ENCODE measurements at regions of chr1 and their contacts with region 1.

Region 1: DNA sequence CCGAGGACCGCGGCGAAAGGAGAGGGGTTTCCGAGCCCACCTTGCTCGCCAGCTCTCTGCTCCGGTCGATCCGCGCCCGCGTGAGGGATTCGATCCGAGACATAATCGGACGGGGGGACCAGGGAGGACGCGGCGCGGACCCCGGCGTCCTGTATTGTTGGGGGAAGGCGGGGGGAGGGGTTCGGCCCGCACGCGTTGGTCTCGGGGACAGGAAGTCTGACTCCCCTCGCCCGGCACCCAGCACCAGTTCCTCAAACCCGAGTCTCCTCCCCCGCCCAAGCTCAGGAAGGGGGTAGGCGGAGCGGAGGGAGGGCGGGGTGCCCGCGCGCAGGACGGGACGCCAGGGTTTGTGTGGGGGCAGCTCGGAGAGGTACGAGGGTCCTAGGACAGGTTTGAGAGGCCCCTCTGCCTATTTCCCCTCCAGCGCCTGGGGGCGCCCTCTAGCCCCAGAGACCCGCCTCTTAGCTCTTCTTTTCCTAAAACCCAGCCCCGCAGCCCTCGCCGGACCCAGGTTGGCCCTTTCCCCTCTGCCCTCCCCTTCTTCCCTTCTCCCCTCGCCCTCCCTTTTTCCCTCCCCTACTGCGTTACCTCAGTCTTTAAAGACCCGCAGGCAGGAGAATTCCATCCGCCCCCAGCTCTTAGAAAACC is at the start of gene ARHGEF2:
- DNase-seq: peak; percentile 63 to 82 (median 66)
- H3K4me3 ChIP-seq: peak within 1 kb of the TSS; percentile 87 to 96
- H3K4me3 Mint-ChIP-seq: peak within 1 kb of the TSS; percentile 93 to 99 (median 97)
- H3K27ac ChIP-seq: peak within 1 kb of the TSS; percentile 86
- H3K27ac Mint-ChIP-seq: peak within 1 kb of the TSS; percentile 81 to 98 (median 96)
- H3K4me1 ChIP-seq: peaks cover 73% of the 10 kb centered on the region
- H3K4me1 Mint-ChIP-seq: peaks cover 49 to 89% (median 62%) of the 10 kb centered on the region in 4 donors
- H3K27me3 ChIP-seq: no peaks in the 10 kb centered on the region
- H3K27me3 Mint-ChIP-seq: no peaks in the 10 kb centered on the region
- total RNA-seq, gene ARHGEF2: 190 to 198 TPM

Region 2: DNA sequence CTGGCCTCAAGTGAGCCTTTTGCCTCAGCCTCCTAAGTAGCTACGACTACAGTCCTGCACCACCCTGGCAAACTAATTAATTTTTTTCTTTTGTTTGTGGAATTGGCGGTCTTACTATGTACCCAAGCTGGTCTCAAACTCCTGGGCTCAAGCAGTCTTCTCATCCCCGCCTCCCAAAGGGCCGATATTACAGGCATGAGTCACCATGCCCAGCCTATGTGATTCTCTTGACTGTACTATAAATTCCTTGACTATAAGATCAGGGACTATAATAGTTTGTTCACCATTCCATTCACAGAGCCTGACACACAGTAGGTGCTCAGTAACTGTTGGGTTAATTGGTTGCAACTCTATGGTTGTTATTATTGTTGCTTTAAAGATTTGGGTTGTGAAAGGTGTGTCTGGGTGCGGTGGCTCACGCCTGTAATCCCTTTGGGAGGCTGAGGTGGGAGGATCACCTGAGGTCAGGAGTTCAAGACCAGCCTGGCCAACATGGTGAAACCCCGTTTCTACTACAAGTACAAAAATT is 272.3 kb before region 1 on chr1:
- CTCF ChIA-PET with region 1: no interaction called
- POLR2A ChIA-PET with region 1: no interaction called
- intact Hi-C with region 1: no loop called
- DNase-seq: no peak
- H3K4me3 ChIP-seq: no peak overlapping the region
- H3K4me3 Mint-ChIP-seq: no peak overlapping the region
- H3K27ac ChIP-seq: no peak overlapping the region
- H3K27ac Mint-ChIP-seq: peak overlapping the region in 1 of 7 donors; percentile 53
- H3K4me1 ChIP-seq: peaks cover 6% of the 10 kb centered on the region
- H3K4me1 Mint-ChIP-seq: peaks cover 17 to 31% (median 21%) of the 10 kb centered on the region in 4 donors
- H3K27me3 ChIP-seq: no peaks in the 10 kb centered on the region
- H3K27me3 Mint-ChIP-seq: no peaks in the 10 kb centered on the region

Region 3: DNA sequence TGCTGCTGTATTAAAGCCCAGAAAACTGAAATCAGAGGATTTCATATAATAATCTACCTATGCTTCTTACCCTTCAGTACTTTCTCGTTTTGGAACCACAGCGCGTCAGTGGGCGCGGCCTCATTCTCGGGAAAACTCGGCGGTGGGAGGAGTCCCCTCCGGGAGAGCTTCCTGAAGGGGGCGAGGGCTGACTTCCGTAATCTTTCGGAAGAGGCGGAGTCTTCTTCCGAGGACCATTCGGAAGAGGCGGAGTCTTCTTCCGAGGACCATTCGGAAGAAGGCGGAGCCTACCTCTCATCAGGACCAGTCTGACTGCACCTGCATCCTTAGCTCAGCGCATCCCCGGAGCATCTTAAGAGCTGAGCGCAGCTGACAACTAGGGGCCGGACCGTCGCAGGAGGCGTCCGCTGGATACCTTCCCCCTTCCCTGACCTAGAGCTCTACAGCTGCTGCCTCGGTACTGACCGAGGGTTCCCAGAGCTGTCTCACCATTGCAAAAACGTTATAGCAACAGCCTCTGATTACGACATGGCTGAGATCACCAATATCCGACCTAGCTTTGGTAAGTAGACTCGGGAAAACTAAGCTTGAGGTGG is 119.1 kb before region 1 on chr1 and contains the start of gene SYT11:
- CTCF ChIA-PET with region 1: no interaction called
- POLR2A ChIA-PET with region 1: interaction called, 6 read pairs
- intact Hi-C with region 1: loop called (anchors 5 kb)
- DNase-seq: peak; percentile 88 to 94 (median 91)
- H3K4me3 ChIP-seq: peak within 1 kb of the TSS; percentile 36 to 68
- H3K4me3 Mint-ChIP-seq: peak within 1 kb of the TSS; percentile 88 to 99 (median 90)
- H3K27ac ChIP-seq: peak within 1 kb of the TSS; percentile 73
- H3K27ac Mint-ChIP-seq: peak within 1 kb of the TSS; percentile 88 to 100 (median 96)
- H3K4me1 ChIP-seq: peaks cover 48% of the 10 kb centered on the region
- H3K4me1 Mint-ChIP-seq: peaks cover 18 to 53% (median 33%) of the 10 kb centered on the region in 4 donors
- H3K27me3 ChIP-seq: no peaks in the 10 kb centered on the region
- H3K27me3 Mint-ChIP-seq: no peaks in the 10 kb centered on the region
- total RNA-seq, gene SYT11: 17.7 to 18.2 TPM

Region 4: DNA sequence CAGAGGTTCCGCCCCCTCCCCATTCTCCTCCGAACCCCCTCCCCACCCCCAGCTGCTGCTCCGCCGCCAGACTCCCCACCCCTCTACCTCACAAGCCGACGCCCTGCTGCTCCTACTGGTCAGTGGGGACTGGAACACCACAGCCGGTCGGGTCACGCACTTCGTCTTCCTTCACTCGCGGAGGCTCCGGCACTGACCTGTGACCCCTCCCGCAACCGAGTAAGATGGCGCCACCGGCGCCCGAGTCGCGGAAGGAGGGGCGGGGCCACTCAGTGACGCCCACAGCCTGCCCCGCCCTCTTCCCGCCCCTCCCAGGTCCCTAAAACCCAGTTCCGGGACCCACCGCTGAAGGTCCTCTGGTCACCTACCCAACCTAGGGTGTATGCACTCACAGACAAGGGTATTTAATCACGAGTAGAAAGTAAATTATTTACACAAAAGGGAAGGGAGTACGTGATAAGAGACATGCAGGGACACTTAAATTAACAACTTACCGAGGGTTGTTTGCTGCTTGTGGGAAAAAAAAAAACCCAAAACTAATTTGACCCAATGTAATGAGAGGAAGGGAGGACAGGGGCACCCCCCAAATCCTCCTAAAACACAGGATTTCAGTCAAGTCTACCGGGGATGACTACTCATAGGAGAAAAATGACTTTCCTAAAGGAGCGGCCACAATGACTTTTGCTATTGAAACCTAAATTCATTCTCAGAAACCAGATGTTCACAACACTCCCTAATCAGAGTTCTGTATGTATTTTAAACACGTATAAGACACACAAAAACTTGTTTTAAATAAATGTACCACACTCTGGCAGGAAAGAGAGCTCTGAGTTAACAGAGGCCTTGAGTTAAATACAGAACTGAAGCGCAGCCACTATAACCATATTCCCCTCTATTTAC is 67.0 kb before region 1 on chr1 and contains the start of gene RIT1:
- CTCF ChIA-PET with region 1: interaction called, 3 read pairs
- POLR2A ChIA-PET with region 1: interaction called, 4 read pairs
- intact Hi-C with region 1: loop called (anchors 2 kb)
- DNase-seq: peak; percentile 78 to 87 (median 80)
- H3K4me3 ChIP-seq: peak within 1 kb of the TSS; percentile 85 to 86
- H3K4me3 Mint-ChIP-seq: peak within 1 kb of the TSS; percentile 92 to 99 (median 98)
- H3K27ac ChIP-seq: peak within 1 kb of the TSS; percentile 79
- H3K27ac Mint-ChIP-seq: peak within 1 kb of the TSS; percentile 86 to 99 (median 98)
- H3K4me1 ChIP-seq: peaks cover 21% of the 10 kb centered on the region
- H3K4me1 Mint-ChIP-seq: peaks cover 16 to 28% (median 21%) of the 10 kb centered on the region in 4 donors
- H3K27me3 ChIP-seq: no peaks in the 10 kb centered on the region
- H3K27me3 Mint-ChIP-seq: no peaks in the 10 kb centered on the region
- total RNA-seq, gene RIT1: 45.0 to 48.0 TPM

Region 5: GRCh38 chr1:155946633-155947219 is 31.7 kb before region 1 on chr1:
- CTCF ChIA-PET with region 1: interaction called, 4 read pairs
- POLR2A ChIA-PET with region 1: interaction called, 179 read pairs
- intact Hi-C with region 1: no loop called
- DNase-seq: no peak
- H3K4me3 ChIP-seq: no peak overlapping the region
- H3K4me3 Mint-ChIP-seq: peak overlapping the region in 6 of 8 donors; percentile 36 to 82 (median 54)
- H3K27ac ChIP-seq: peak overlapping the region; percentile 48
- H3K27ac Mint-ChIP-seq: peak overlapping the region; percentile 84 to 95 (median 91)
- H3K4me1 ChIP-seq: peaks cover 36% of the 10 kb centered on the region
- H3K4me1 Mint-ChIP-seq: peaks cover 15 to 45% (median 33%) of the 10 kb centered on the region in 4 donors
- H3K27me3 ChIP-seq: no peaks in the 10 kb centered on the region
- H3K27me3 Mint-ChIP-seq: no peaks in the 10 kb centered on the region

Region 6: GRCh38 chr1:155961937-155962336 is 16.5 kb before region 1 on chr1:
- CTCF ChIA-PET with region 1: interaction called, 19 read pairs
- POLR2A ChIA-PET with region 1: interaction called, 199 read pairs
- intact Hi-C with region 1: loop called (anchors 1 kb)
- DNase-seq: no peak
- H3K4me3 ChIP-seq: no peak overlapping the region
- H3K4me3 Mint-ChIP-seq: no peak overlapping the region
- H3K27ac ChIP-seq: peak overlapping the region; percentile 38
- H3K27ac Mint-ChIP-seq: peak overlapping the region in 6 of 7 donors; percentile 57 to 78 (median 76)
- H3K4me1 ChIP-seq: peaks cover 19% of the 10 kb centered on the region
- H3K4me1 Mint-ChIP-seq: peaks cover 9 to 33% (median 17%) of the 10 kb centered on the region in 4 donors
- H3K27me3 ChIP-seq: no peaks in the 10 kb centered on the region
- H3K27me3 Mint-ChIP-seq: no peaks in the 10 kb centered on the region

Region 7: GRCh38 chr1:155989242-155990004 is 11.0 kb after region 1 on chr1:
- CTCF ChIA-PET with region 1: interaction called, 47 read pairs
- POLR2A ChIA-PET with region 1: interaction called, 6 read pairs
- intact Hi-C with region 1: loop called (anchors 1 kb)
- DNase-seq: peak; percentile 77 to 84 (median 79)
- H3K4me3 ChIP-seq: no peak overlapping the region
- H3K4me3 Mint-ChIP-seq: peak overlapping the region in 1 of 8 donors; percentile 63
- H3K27ac ChIP-seq: no peak overlapping the region
- H3K27ac Mint-ChIP-seq: peak overlapping the region in 2 of 7 donors; percentile 19 to 91
- H3K4me1 ChIP-seq: peaks cover 12% of the 10 kb centered on the region
- H3K4me1 Mint-ChIP-seq: peaks cover 6 to 16% (median 8%) of the 10 kb centered on the region in 4 donors
- H3K27me3 ChIP-seq: no peaks in the 10 kb centered on the region
- H3K27me3 Mint-ChIP-seq: no peaks in the 10 kb centered on the region

Region 8: GRCh38 chr1:156262461-156263287 is 284.2 kb after region 1 on chr1:
- CTCF ChIA-PET with region 1: no interaction called
- POLR2A ChIA-PET with region 1: no interaction called
- intact Hi-C with region 1: no loop called
- DNase-seq: no peak
- H3K4me3 ChIP-seq: no peak overlapping the region
- H3K4me3 Mint-ChIP-seq: no peak overlapping the region
- H3K27ac ChIP-seq: no peak overlapping the region
- H3K27ac Mint-ChIP-seq: peak overlapping the region in 2 of 7 donors; percentile 31 to 36
- H3K4me1 ChIP-seq: no peaks in the 10 kb centered on the region
- H3K4me1 Mint-ChIP-seq: peaks cover 0 to 4% (median 2%) of the 10 kb centered on the region in 4 donors
- H3K27me3 ChIP-seq: no peaks in the 10 kb centered on the region
- H3K27me3 Mint-ChIP-seq: no peaks in the 10 kb centered on the region